Mammary epithelial cell (primary cell): ENCODE measurements at regions of chr3 and their contacts with region 1.

Region 1: GRCh38 chr3:57961828-57962447 is 46.3 kb upstream of the FLNB start:
- DNase-seq: peak; percentile 64
- H3K4me3 ChIP-seq: no peak overlapping the region
- H3K27ac ChIP-seq: no peak overlapping the region
- H3K4me1 ChIP-seq: peaks cover 32% of the 10 kb centered on the region
- H3K27me3 ChIP-seq: no peaks in the 10 kb centered on the region
- CTCF ChIP-seq: peak; percentile 62 to 70

Region 2: GRCh38 chr3:57709559-57709958 is 252.4 kb before region 1 on chr3:
- CTCF ChIA-PET with region 1: no interaction called
- dilution Hi-C with region 1: no loop called
- in situ Hi-C with region 1: no loop called
- intact Hi-C with region 1: no loop called
- DNase-seq: peak; percentile 66
- H3K4me3 ChIP-seq: no peak overlapping the region
- H3K27ac ChIP-seq: peak overlapping the region; percentile 69
- H3K4me1 ChIP-seq: peaks cover 18% of the 10 kb centered on the region
- H3K27me3 ChIP-seq: no peaks in the 10 kb centered on the region
- CTCF ChIP-seq: no peak

Region 3: DNA sequence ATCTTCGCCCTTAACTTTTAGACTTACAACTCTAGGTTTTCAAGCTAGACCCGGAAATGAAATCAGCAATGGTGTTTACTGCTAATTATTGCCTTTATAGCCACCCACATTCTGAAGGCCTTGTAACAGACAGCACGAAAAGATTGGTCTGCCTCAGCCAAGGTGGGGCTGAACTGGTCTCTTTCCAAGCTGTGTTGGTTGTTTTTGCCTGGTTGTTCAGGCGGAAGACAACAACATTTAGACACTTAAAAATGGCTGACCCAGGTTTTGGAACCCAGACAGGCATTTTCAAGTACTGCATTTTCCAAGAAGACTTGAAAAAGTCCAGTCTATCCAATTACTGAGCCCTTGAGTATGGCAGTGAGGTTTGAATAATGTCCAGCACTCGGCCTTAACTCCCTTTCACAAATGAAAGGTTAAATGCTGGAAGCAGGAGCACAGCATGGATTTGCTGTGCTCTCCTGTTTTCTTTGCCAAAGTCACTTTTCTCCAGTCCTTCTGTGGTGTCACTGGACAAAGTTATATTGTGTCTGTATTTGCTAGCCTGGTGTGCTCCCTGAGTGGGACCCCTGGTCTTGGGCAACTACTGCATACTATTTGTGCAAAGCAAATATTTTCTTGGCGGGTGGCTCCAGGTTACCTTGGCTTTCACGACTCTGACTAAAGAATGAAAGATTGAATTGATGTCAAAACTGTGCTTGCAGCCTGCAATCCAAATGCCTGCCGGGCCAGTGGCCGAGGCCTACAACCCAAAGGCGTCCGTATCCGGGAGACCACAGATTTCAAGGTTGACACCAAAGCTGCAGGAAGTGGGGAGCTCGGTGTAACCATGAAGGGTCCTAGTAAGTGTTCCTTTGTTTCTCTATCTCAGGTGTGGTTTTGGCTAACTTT is 139.8 kb after region 1 on chr3:
- CTCF ChIA-PET with region 1: no interaction called
- dilution Hi-C with region 1: no loop called
- in situ Hi-C with region 1: no loop called
- intact Hi-C with region 1: loop called (anchors 1 kb)
- DNase-seq: no peak
- H3K4me3 ChIP-seq: no peak overlapping the region
- H3K27ac ChIP-seq: peak overlapping the region; percentile 62
- H3K4me1 ChIP-seq: peaks cover 34% of the 10 kb centered on the region
- H3K27me3 ChIP-seq: no peaks in the 10 kb centered on the region
- CTCF ChIP-seq: no peak

Region 4: GRCh38 chr3:58112187-58112540 is 150.2 kb after region 1 on chr3:
- CTCF ChIA-PET with region 1: no interaction called
- dilution Hi-C with region 1: no loop called
- in situ Hi-C with region 1: no loop called
- intact Hi-C with region 1: no loop called
- DNase-seq: no peak
- H3K4me3 ChIP-seq: no peak overlapping the region
- H3K27ac ChIP-seq: no peak overlapping the region
- H3K4me1 ChIP-seq: peaks cover 10% of the 10 kb centered on the region
- H3K27me3 ChIP-seq: no peaks in the 10 kb centered on the region
- CTCF ChIP-seq: no peak

Region 5: DNA sequence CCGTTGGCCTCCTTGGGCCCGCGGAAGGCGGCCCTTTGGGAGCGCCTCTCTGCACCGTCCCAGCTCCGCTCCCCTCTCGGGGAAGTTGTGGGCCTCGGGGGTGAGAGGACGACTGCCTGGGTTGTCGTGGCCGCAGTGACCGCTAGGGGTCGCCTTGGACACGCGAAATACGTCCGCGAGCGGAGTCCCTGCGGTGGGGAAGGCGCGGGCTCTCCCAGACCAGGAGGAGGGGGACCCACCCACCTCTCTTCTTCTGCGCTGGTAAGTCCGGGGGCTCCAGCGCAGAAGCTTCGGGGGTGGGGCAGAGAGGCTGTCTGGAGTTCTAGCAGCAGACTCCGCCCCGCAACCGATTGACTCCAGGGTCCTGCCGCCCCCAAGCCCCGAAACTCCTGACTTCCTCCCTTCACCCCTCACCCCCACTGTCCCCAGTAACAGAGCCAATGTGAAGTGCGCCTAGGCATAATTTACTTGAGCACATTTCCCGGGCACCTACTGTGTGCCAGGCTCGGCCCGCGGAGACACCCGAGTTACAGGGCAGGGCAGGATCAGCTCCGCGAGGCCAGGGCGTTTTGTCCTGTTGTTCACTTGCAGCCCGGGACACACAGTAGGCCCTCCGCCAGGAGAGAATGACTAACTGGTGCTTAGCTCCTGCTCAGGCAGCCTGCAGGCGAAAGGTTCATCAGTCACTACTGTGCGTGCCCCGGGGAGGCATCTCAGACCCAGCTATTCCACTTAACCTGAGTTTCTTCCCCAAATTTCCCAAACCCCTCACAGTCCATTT is 216.0 kb after region 1 on chr3:
- CTCF ChIA-PET with region 1: no interaction called
- dilution Hi-C with region 1: no loop called
- in situ Hi-C with region 1: no loop called
- intact Hi-C with region 1: loop called (anchors 5 kb)
- DNase-seq: peak; percentile 70
- H3K4me3 ChIP-seq: peak overlapping the region in 1 of 3 experiments; percentile 32
- H3K27ac ChIP-seq: no peak overlapping the region
- H3K4me1 ChIP-seq: peaks cover 61% of the 10 kb centered on the region
- H3K27me3 ChIP-seq: no peaks in the 10 kb centered on the region
- CTCF ChIP-seq: peak; percentile 53 to 95

Region 6: GRCh38 chr3:58299839-58300516 is 338.0 kb after region 1 on chr3:
- CTCF ChIA-PET with region 1: interaction called, 7 read pairs
- dilution Hi-C with region 1: no loop called
- in situ Hi-C with region 1: no loop called
- intact Hi-C with region 1: loop called (anchors 2 kb)
- DNase-seq: peak; percentile 14
- H3K4me3 ChIP-seq: no peak overlapping the region
- H3K27ac ChIP-seq: no peak overlapping the region
- H3K4me1 ChIP-seq: no peaks in the 10 kb centered on the region
- H3K27me3 ChIP-seq: no peaks in the 10 kb centered on the region
- CTCF ChIP-seq: peak; percentile 52 to 63